ENCODE measurements at regions of chr14 and their contacts with region 1.

Region 1: DNA sequence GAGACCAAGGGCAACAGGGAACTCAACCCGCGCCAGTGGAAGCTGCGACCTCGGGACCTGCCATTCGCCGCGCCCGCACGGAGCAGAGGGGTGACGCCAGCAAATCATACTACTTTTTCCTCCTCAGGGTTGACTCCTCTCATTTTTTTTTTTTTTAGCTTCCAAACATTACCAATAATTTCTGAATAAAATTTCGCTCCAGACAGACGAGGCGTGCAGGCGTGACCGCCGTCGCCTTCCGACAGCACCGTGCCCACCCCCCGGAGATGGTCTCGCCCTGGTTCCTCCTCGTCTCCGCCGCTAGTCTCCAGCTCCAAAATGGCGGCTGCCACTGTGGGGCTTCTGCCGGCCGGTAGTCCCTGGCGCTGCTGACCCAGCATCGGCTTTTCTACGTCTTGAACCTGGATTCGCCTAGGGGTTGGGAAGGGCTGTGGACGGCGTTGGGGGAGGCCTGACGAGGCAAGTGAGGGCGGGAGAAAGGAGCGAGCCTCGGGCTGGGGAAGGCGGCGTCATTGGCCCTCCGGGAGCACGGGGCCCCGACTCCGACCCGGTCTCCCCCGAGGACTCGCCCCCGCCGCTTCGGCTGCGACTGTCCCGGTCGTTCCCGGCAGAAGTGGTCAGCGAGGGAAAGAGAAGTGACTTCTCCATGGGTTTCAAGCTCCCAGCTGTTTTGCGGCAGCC is at the starts of genes CPSF2 and NDUFB1:
- DNase-seq: peak; percentile 72
- ATAC-seq: peak; percentile 91
- H3K4me3 ChIP-seq: peak within 1 kb of the TSS; percentile 95
- H3K27ac ChIP-seq: peak within 1 kb of the TSS; percentile 98
- H3K4me1 ChIP-seq: peaks cover 2% of the 10 kb centered on the region; the same call in 1 of the 2 replicates
- H3K27me3 ChIP-seq: no peaks in the 10 kb centered on the region
- CTCF ChIP-seq: no peak
- POLR2A ChIP-seq: peak; percentile 96
- RAD21 ChIP-seq: no peak
- total RNA-seq, gene CPSF2: 30.6 and 51.7 TPM in 2 replicates
- total RNA-seq, gene NDUFB1: 32.1 and 158 TPM in 2 replicates

Region 2: DNA sequence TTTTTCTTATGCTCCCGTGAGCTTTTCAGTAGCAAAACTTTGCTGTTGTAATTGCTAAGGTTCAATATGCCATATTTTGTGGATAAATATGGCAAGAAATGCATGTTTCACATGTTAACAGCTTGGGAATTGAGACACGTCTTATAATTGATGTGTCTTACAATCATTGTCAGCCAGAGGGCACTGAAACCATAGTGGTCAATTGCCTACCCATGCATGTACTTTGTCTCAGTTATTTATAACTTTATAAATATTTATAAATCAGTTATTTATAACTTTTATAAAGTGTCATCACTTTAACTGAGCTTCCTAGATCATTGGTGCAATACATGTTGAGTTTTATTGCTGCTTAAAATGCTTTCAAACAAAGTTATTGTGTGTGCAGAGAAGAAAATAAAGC is 471.9 kb before region 1 on chr14:
- CTCF ChIA-PET with region 1: no interaction called
- POLR2A ChIA-PET with region 1: no interaction called
- dilution Hi-C with region 1: no loop called
- in situ Hi-C with region 1: no loop called
- intact Hi-C with region 1: loop called (anchors 5 kb)
- DNase-seq: peak; percentile 49
- ATAC-seq: peak; percentile 82
- H3K4me3 ChIP-seq: no peak overlapping the region
- H3K27ac ChIP-seq: no peak overlapping the region
- H3K4me1 ChIP-seq: no peaks in the 10 kb centered on the region
- H3K27me3 ChIP-seq: no peaks in the 10 kb centered on the region; the same call in 1 of the 2 replicates
- CTCF ChIP-seq: peak; percentile 50
- POLR2A ChIP-seq: no peak
- RAD21 ChIP-seq: peak; percentile 70

Region 3: DNA sequence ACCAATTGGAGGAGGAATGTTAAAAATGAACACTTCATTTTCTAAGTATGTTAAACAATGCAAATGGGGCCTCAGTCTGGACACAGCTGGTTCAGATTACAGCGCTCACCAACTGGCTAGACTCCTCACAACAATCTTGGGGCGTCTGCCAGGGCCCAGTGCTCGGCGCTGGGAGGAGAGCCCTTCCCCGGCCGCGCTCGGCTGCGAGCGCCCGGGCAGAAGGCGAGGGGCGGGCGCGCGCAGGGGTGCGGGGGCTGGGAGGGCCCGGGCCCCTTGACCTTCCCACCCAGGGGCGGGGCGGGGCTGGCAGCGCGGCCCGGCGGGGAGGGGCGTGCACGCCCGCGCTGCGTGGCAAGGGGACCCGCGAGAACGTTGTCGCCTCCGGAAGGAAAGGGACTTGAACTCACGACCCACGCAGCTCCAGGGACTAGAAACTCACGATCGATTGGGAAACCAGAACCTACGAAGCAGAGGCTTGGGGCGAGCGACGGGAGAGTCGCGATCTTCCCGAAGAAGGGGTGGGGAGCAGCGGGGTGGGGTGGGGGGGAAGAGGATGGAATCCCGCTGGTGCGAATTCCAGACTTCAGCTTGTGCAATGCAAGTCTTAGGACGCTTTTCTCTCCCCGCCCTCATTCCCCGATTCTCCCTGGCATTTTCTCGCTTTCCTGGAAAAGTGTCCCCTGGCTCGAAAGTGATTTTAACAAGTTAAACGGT is 174.2 kb before region 1 on chr14 and contains the start of gene FBLN5:
- CTCF ChIA-PET with region 1: no interaction called
- POLR2A ChIA-PET with region 1: interaction called, 15 read pairs
- dilution Hi-C with region 1: no loop called
- in situ Hi-C with region 1: no loop called
- intact Hi-C with region 1: no loop called
- DNase-seq: peak; percentile 88
- ATAC-seq: peak; percentile 78
- H3K4me3 ChIP-seq: peak within 1 kb of the TSS; percentile 72
- H3K27ac ChIP-seq: peak within 1 kb of the TSS; percentile 91
- H3K4me1 ChIP-seq: peaks cover 6% of the 10 kb centered on the region
- H3K27me3 ChIP-seq: no peaks in the 10 kb centered on the region
- CTCF ChIP-seq: no peak
- POLR2A ChIP-seq: no peak; the same call in 1 of the 2 replicates
- RAD21 ChIP-seq: no peak
- total RNA-seq, gene FBLN5: 9.7 and 10.6 TPM in 2 replicates

Region 4: DNA sequence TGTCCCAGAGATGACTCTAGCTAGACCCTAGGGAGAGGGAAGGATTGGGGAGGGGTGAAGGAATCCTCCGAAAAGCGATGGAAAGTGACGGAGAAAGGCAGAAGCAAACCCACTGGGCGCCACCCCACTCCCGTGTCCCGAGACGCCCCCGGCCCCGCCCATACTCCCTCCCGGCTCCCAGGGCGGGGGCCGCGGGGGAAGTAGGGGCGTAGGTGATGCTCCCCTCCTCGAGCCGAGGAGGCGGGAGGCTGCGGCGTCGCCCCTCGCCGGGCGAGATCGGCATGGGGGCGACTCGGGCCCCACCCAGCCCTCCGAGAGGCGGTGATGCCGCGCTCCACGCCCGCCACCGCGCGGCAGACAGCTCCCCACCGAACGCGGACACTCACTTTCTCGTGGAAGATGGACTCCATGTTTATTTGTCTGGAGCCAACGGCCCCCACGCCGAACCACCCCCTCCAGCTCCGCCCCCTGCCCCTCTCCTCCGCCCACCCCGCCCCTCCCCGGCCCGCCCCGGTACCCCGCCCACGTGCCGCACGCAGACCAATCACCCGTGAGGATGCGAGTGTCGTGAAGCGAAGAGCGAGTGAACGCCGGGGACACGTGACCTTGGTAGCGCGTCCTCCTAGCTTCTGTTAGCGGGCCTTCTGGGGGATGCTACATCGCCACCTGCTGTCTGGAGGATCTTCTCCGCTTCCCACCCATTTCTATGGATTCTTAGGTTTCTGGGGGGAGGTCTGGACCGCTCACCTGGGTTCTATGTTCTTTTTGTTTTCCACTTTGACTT is 15.5 kb before region 1 on chr14 and contains the start of gene ATXN3:
- CTCF ChIA-PET with region 1: interaction called, 14 read pairs
- POLR2A ChIA-PET with region 1: interaction called, 8 read pairs
- dilution Hi-C with region 1: no loop called
- in situ Hi-C with region 1: no loop called
- intact Hi-C with region 1: no loop called
- DNase-seq: peak; percentile 99
- ATAC-seq: peak; percentile 95
- H3K4me3 ChIP-seq: peak within 1 kb of the TSS; percentile 85
- H3K27ac ChIP-seq: peak within 1 kb of the TSS; percentile 91
- H3K4me1 ChIP-seq: peaks cover 7% of the 10 kb centered on the region; the same call in 1 of the 2 replicates
- H3K27me3 ChIP-seq: no peaks in the 10 kb centered on the region
- CTCF ChIP-seq: peak; percentile 93
- POLR2A ChIP-seq: peak; percentile 78
- RAD21 ChIP-seq: peak; percentile 48
- total RNA-seq, gene ATXN3: 9.0 and 38.3 TPM in 2 replicates

Region 5: GRCh38 chr14:92456215-92457015 is 334.6 kb after region 1 on chr14:
- CTCF ChIA-PET with region 1: no interaction called
- POLR2A ChIA-PET with region 1: no interaction called
- dilution Hi-C with region 1: no loop called
- in situ Hi-C with region 1: loop called (anchors 5 kb)
- intact Hi-C with region 1: no loop called
- DNase-seq: peak; percentile 70
- ATAC-seq: peak; percentile 97
- H3K4me3 ChIP-seq: no peak overlapping the region
- H3K27ac ChIP-seq: no peak overlapping the region
- H3K4me1 ChIP-seq: peaks cover 6% of the 10 kb centered on the region
- H3K27me3 ChIP-seq: no peaks in the 10 kb centered on the region; the same call in 1 of the 2 replicates
- CTCF ChIP-seq: peak; percentile 85
- POLR2A ChIP-seq: no peak
- RAD21 ChIP-seq: peak; percentile 87

Region 6: DNA sequence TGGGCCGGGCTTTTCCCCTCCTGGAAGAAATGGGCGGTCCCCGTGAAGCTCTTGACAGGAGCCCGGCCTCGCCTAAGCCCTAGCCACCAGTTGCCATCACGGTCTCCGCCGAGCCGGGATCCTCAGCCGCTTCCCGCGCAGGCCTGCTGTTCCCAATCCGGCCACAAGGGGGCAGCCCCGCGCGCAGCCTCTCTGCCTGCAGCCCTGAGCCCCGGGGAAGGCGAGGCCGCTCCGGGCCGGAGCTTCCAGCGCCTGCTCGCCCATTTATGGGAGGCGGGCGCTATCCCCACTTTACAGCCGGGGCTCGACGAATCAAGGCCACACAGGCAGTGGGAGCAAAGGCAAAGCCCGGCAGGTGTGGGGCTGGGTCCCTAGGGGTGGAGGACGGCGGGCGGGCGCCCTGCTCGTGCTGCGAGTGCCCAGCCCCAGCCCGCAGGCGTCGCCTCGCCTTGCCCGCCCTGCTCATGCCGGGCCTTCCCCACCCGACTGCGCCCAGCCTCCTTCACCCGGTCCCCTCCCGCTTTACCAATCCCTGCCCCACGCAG is 565.2 kb after region 1 on chr14:
- CTCF ChIA-PET with region 1: no interaction called
- POLR2A ChIA-PET with region 1: no interaction called
- dilution Hi-C with region 1: no loop called
- in situ Hi-C with region 1: loop called (anchors 10 kb)
- intact Hi-C with region 1: no loop called
- DNase-seq: peak; percentile 43
- ATAC-seq: peak; percentile 99
- H3K4me3 ChIP-seq: no peak overlapping the region
- H3K27ac ChIP-seq: no peak overlapping the region
- H3K4me1 ChIP-seq: 0 out of 2 replicates have a peak, but pooled peaks cover 2% of the 10 kb centered on the region
- H3K27me3 ChIP-seq: no peaks in the 10 kb centered on the region
- CTCF ChIP-seq: peak; percentile 96
- POLR2A ChIP-seq: no peak
- RAD21 ChIP-seq: peak; percentile 85

Region 7: GRCh38 chr14:92793709-92794546 is 672.1 kb after region 1 on chr14 and contains the start of gene GOLGA5:
- CTCF ChIA-PET with region 1: no interaction called
- POLR2A ChIA-PET with region 1: no interaction called
- dilution Hi-C with region 1: no loop called
- in situ Hi-C with region 1: loop called (anchors 10 kb)
- intact Hi-C with region 1: no loop called
- DNase-seq: peak; percentile 98
- ATAC-seq: peak; percentile 97
- H3K4me3 ChIP-seq: peak within 1 kb of the TSS; percentile 85
- H3K27ac ChIP-seq: peak within 1 kb of the TSS; percentile 88
- H3K4me1 ChIP-seq: peaks cover 2% of the 10 kb centered on the region; the same call in 1 of the 2 replicates
- H3K27me3 ChIP-seq: no peaks in the 10 kb centered on the region
- CTCF ChIP-seq: no peak
- POLR2A ChIP-seq: peak; percentile 94
- RAD21 ChIP-seq: no peak
- total RNA-seq, gene GOLGA5: 59.5 and 70.8 TPM in 2 replicates

Measured in IMR-90 (cell line).